ENCODE measurements at regions of chr7 and their contacts with region 1.

Region 1: GRCh38 chr7:121107923-121108498 is 119.5 kb downstream of the CPED1 start:
- DNase-seq: peak; percentile 26 to 65 (median 49)
- H3K4me3 ChIP-seq: no peak overlapping the region
- H3K4me3 Mint-ChIP-seq: no peak overlapping the region
- H3K27ac ChIP-seq: no peak overlapping the region
- H3K27ac Mint-ChIP-seq: no peak overlapping the region
- H3K4me1 ChIP-seq: no peaks in the 10 kb centered on the region
- H3K4me1 Mint-ChIP-seq: no peaks in the 10 kb centered on the region
- H3K27me3 ChIP-seq: no peaks in the 10 kb centered on the region
- H3K27me3 Mint-ChIP-seq: peaks cover 0 to 1% (median 0%) of the 10 kb centered on the region in 3 donors
- CTCF ChIP-seq: peak; percentile 89

Region 2: DNA sequence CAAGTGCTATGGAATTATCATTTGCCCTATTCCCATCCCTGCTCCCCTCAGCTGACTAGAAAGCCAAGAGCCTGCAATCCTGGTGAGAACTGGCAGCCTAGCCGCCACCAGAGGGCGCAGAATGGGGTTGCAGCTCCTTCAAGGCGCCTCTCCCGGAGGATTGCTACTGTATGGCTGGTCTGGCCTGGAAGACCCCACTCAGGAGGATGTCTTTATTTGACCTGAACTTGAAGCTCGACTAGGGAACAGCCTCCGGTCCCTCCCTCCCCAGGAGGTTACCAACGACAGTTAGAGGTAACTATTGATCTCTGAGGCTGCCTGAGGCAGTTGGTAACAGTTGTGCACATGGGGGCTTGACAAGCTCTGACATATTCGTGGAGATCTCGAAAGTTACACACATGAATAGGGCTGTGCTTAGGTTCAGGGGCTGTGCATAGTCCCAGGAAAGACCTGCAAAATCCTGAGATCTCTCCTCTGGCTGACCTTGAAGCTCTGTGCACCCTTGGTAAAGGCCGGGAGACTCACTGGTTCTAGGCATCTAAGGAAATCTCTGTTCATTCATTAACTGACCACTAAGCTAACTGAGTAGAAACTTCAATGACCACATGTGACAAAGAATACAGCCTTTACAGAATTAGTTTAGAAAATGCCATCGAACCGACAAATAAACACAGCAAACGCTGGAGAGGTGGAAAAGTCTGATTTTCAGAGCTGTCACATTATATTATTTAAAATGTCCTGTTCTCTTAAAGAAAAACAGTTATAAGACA is 315.7 kb before region 1 on chr7:
- intact Hi-C with region 1: loop called in 1 of 2 experiments (anchors 10 kb)
- DNase-seq: peak; percentile 19 to 51 (median 43)
- H3K4me3 ChIP-seq: no peak overlapping the region
- H3K4me3 Mint-ChIP-seq: no peak overlapping the region
- H3K27ac ChIP-seq: no peak overlapping the region
- H3K27ac Mint-ChIP-seq: no peak overlapping the region
- H3K4me1 ChIP-seq: no peaks in the 10 kb centered on the region
- H3K4me1 Mint-ChIP-seq: no peaks in the 10 kb centered on the region
- H3K27me3 ChIP-seq: no peaks in the 10 kb centered on the region
- H3K27me3 Mint-ChIP-seq: peaks cover 0 to 3% (median 3%) of the 10 kb centered on the region in 3 donors
- CTCF ChIP-seq: peak; percentile 92

Region 3: DNA sequence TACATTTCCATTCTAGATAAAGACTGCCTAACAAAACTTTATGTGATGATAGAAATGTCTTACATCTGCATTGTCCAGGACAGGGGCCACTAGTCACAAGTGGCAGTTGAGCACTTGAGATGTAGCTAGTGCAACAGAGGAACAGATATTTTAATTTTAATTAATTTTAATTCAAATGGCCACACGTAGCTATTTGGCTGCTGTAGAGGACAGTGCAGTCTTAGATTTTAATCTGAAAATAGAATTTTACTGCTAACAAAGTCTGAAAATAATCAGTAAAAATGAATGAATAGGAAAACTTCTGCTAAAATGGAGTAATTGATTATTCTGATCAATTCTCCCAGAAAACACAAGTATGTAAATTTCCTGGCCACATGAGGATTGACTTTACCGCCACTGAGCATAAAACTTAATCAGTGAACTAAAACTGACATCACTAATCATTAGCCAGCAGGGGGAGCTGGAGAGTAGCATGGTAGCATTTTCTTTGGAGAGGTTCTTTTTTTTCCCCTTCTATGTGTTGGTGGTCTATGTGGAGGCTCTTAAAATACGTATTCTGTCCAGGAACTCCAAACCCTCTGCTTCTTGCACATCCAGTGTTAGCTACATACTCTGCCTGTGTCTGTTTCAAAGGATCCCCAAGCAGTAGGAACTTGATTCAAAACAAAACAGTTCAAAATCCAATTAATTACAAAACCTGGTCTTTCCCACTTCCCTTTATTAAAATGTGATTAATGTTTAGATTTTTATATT is 302.2 kb before region 1 on chr7:
- intact Hi-C with region 1: loop called in 1 of 2 experiments (anchors 10 kb)
- DNase-seq: peak; percentile 18 to 49 (median 39)
- H3K4me3 ChIP-seq: no peak overlapping the region
- H3K4me3 Mint-ChIP-seq: no peak overlapping the region
- H3K27ac ChIP-seq: no peak overlapping the region
- H3K27ac Mint-ChIP-seq: no peak overlapping the region
- H3K4me1 ChIP-seq: no peaks in the 10 kb centered on the region
- H3K4me1 Mint-ChIP-seq: no peaks in the 10 kb centered on the region
- H3K27me3 ChIP-seq: no peaks in the 10 kb centered on the region
- H3K27me3 Mint-ChIP-seq: no peaks in the 10 kb centered on the region
- CTCF ChIP-seq: peak; percentile 91

Region 4: GRCh38 chr7:121278120-121279021 is 170.4 kb after region 1 on chr7:
- intact Hi-C with region 1: no loop called
- DNase-seq: no peak
- H3K4me3 ChIP-seq: no peak overlapping the region
- H3K4me3 Mint-ChIP-seq: no peak overlapping the region
- H3K27ac ChIP-seq: no peak overlapping the region
- H3K27ac Mint-ChIP-seq: no peak overlapping the region
- H3K4me1 ChIP-seq: no peaks in the 10 kb centered on the region
- H3K4me1 Mint-ChIP-seq: no peaks in the 10 kb centered on the region
- H3K27me3 ChIP-seq: no peaks in the 10 kb centered on the region
- H3K27me3 Mint-ChIP-seq: peaks cover 0 to 1% (median 0%) of the 10 kb centered on the region in 3 donors
- CTCF ChIP-seq: no peak